CD4-positive, alpha-beta T cell (primary cell): ENCODE measurements at regions of chr22 and their contacts with region 1.

Region 1: DNA sequence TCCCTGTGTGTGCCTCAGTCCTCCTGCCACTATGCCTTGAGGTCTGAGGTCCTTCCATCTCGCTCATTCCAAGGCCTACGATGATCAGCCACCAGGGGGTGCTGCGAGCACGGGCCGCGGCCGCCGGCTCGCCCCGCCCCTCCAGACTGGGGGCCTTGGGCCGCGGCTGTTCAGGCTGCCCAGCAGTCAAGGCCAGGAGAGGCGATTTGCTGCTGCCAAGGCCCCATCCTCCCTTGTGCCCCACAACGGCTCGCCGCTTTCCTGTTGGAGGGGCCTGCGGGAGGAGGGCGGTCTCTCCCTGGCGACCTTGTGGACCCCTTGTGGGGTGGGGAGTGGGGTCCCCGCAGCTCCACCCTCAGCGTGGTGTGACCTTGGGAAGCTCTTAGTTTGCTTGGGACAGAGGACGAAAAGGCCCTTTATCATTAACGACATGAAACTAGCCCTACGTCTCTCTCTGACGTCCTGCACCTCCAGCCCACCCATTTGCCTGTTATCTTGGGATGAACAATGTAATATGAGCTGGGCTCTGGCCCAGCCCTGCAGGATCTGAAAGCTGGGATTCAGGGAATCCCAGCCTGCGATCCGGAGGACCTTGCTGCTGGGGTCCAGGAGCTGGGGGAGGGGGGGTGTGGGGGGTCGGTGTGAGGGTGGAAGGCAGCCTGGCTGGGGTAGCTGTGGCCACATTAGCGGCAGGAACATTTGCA is 5.3 kb upstream of the GALR3 start:
- DNase-seq: peak; percentile 53 to 88 (median 78)
- ATAC-seq: peak; percentile 77
- H3K4me3 ChIP-seq: peak overlapping the region; percentile 36
- H3K4me3 Mint-ChIP-seq: no peak overlapping the region
- H3K27ac ChIP-seq: no peak overlapping the region
- H3K27ac Mint-ChIP-seq: no peak overlapping the region
- H3K4me1 ChIP-seq: peaks cover 21% of the 10 kb centered on the region
- H3K4me1 Mint-ChIP-seq: peaks cover 3% of the 10 kb centered on the region
- H3K27me3 ChIP-seq: peaks cover 5 to 15% of the 10 kb centered on the region in 2 experiments
- H3K27me3 Mint-ChIP-seq: peaks cover 38% of the 10 kb centered on the region
- CTCF ChIP-seq: peak; percentile 83

Region 2: DNA sequence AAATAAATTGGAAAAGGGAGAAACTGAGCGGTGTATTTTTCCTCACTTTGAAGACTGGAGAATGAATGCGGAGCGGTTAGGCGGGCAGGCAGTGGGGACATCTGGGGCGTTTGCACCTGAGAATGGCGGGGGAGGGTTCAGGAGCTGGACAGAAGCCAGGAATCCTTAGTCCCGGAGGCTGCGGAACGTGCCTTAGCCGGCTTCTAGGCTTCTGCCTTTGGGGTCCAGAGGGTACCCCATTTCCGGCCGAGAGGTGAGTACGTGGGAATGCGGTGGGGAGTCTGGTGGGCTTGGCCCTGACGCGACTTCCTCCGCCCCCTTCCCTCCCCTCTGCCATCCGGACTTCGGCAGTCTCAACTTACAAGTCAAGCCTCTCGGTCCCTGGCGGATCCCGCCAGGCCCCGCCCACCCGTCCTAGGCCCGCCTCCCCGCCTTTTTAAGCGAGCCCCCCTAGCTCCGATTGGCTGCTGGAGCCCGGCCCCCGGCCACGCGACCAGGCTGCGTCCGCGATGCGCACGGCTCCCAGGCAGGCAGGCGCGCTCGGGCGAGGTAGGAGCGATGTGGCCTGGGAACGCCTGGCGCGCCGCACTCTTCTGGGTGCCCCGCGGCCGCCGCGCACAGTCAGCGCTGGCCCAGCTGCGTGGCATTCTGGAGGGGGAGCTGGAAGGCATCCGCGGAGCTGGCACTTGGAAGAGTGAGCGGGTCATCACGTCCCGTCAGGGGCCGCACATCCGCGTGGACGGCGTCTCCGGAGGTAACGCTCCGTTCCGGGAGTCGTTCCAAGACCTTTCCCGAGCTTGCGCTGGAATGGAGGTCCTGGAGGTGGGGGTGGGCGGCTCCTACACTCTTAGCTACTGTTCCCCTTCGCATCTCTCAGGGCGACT is 10.2 kb before region 1 on chr22 and contains the start of gene GCAT:
- CTCF ChIA-PET with region 1: interaction called, 22 read pairs
- POLR2A ChIA-PET with region 1: interaction called, 7 read pairs
- intact Hi-C with region 1: no loop called
- DNase-seq: peak; percentile 61 to 96 (median 79)
- ATAC-seq: peak; percentile 81
- H3K4me3 ChIP-seq: peak within 1 kb of the TSS; percentile 58
- H3K4me3 Mint-ChIP-seq: peak within 1 kb of the TSS; percentile 84
- H3K27ac ChIP-seq: no peak within 1 kb of the TSS
- H3K27ac Mint-ChIP-seq: no peak within 1 kb of the TSS
- H3K4me1 ChIP-seq: peaks cover 61% of the 10 kb centered on the region
- H3K4me1 Mint-ChIP-seq: peaks cover 46% of the 10 kb centered on the region
- H3K27me3 ChIP-seq: peaks cover 50 to 66% of the 10 kb centered on the region in 2 experiments
- H3K27me3 Mint-ChIP-seq: peaks cover 43% of the 10 kb centered on the region
- CTCF ChIP-seq: no peak
- total RNA-seq, gene GCAT: 1.4 to 1.8 TPM

Region 3: DNA sequence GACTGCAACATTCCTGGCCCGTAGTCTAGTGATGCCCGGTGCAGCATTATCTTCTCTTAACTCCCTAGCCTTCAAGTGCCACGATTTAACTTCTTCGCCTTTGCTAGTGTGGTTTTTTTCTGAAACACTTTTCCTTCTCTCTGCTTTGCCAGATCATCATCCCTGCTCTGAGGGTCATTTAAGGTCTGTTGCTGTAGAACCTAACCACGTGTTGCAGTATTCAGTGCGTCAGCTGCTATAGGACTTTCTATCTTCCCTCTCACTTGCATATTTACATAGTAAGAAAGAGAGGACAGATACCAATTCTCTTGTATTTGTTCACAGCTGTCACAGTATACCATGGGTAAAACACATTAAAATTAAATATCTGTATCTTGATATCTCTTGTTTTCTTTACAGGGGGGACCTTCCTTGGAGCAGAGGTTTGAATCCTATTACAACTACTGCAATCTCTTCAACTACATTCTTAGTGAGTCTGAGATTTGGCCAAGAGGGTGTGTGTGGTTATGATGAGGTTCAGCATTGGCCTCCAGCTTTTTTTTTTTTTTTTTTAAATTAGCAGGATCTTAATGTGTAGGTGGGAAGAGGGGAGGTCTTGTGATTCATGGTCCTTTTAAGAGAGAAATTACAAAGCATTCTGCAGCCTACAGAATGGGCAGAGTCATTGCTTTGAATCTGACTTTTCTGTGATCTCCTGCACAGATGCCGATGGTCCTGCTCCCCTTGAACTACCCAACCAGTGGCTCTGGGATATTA is 44.9 kb after region 1 on chr22:
- CTCF ChIA-PET with region 1: interaction called, 46 read pairs
- POLR2A ChIA-PET with region 1: interaction called, 4 read pairs
- intact Hi-C with region 1: loop called (anchors 1 kb)
- DNase-seq: no peak
- ATAC-seq: no peak
- H3K4me3 ChIP-seq: no peak overlapping the region
- H3K4me3 Mint-ChIP-seq: no peak overlapping the region
- H3K27ac ChIP-seq: no peak overlapping the region
- H3K27ac Mint-ChIP-seq: no peak overlapping the region
- H3K4me1 ChIP-seq: peaks cover 3% of the 10 kb centered on the region
- H3K4me1 Mint-ChIP-seq: peaks cover 7% of the 10 kb centered on the region
- H3K27me3 ChIP-seq: no peaks in the 10 kb centered on the region
- H3K27me3 Mint-ChIP-seq: no peaks in the 10 kb centered on the region
- CTCF ChIP-seq: no peak

Region 4: DNA sequence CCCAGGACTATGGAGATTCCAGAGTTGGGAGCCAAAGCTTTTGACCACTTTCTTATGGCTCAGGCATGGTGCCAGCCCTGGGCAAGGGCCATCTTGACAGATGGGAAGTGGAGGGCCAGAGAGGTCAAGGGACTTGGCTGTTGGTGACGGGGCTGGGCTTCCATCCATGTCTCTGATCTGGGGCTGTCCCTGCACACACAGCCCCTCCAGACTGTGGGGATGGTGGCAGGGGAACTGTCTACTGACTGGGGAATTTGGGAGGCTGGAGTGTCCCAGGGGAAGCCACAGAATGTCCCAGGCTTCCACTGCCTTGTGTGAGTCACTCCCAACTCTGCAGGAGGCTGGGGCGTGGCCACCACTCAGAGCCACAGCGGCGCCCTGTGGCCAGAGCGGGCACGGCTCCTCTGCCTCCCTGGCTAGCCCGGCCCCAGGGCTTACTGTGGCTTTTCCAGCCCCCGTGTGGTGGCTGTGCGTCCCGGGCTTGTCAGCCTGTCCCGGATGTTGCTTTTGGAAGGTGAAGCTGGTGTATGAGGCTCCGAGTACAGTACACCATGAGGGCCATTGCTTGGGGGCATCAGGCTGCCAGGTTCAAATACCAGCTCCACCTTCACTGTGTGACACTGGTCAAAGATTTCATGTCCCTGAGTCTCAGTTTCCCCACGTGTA is 116.0 kb after region 1 on chr22:
- CTCF ChIA-PET with region 1: no interaction called
- POLR2A ChIA-PET with region 1: no interaction called
- intact Hi-C with region 1: loop called (anchors 1 kb)
- DNase-seq: peak; percentile 64 to 90 (median 76)
- ATAC-seq: peak; percentile 100
- H3K4me3 ChIP-seq: no peak overlapping the region
- H3K4me3 Mint-ChIP-seq: no peak overlapping the region
- H3K27ac ChIP-seq: no peak overlapping the region
- H3K27ac Mint-ChIP-seq: no peak overlapping the region
- H3K4me1 ChIP-seq: peaks cover 9% of the 10 kb centered on the region
- H3K4me1 Mint-ChIP-seq: peaks cover 11% of the 10 kb centered on the region
- H3K27me3 ChIP-seq: no peaks in the 10 kb centered on the region
- H3K27me3 Mint-ChIP-seq: no peaks in the 10 kb centered on the region
- CTCF ChIP-seq: peak; percentile 93

Region 5: DNA sequence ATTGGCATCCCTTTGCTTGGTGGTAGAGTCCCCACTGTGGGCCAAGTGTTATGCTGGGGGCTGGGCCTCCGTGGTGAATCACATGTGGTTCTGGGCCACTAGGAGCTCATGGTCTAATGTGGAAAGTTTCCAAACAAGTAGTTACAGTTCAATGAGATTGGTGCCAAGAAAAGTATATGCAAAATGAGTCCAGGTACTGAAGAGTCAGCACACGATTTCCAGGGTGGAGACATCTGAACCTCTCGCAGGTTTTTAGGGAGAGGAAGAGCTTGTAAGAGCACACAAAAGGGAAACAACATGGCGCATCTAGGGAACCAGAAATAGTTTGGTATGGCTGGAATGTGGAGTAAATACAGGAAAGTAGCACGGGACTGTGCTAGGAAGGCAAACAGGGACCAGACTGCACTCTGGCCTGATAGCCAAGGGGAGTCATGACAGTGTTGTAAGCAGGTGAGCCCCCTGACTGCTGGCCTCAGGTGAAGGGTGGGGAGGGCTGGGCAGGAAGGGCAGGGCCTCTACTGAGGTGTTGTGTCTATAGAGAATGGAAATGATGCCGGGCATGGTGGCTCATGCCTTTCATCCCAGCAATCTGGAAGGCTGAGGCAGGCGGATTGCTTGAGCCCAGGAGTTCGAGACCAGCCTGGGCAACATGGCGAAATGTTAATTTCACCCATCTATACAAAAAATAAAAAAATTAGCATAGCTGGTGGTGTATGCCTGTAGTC is 148.2 kb after region 1 on chr22:
- CTCF ChIA-PET with region 1: interaction called, 5 read pairs
- POLR2A ChIA-PET with region 1: no interaction called
- intact Hi-C with region 1: loop called (anchors 1 kb)
- DNase-seq: no peak
- ATAC-seq: no peak
- H3K4me3 ChIP-seq: no peak overlapping the region
- H3K4me3 Mint-ChIP-seq: no peak overlapping the region
- H3K27ac ChIP-seq: no peak overlapping the region
- H3K27ac Mint-ChIP-seq: no peak overlapping the region
- H3K4me1 ChIP-seq: no peaks in the 10 kb centered on the region
- H3K4me1 Mint-ChIP-seq: peaks cover 6% of the 10 kb centered on the region
- H3K27me3 ChIP-seq: no peaks in the 10 kb centered on the region
- H3K27me3 Mint-ChIP-seq: no peaks in the 10 kb centered on the region
- CTCF ChIP-seq: no peak